ENCODE measurements at regions of chr16 and their contacts with region 1.

Region 1: DNA sequence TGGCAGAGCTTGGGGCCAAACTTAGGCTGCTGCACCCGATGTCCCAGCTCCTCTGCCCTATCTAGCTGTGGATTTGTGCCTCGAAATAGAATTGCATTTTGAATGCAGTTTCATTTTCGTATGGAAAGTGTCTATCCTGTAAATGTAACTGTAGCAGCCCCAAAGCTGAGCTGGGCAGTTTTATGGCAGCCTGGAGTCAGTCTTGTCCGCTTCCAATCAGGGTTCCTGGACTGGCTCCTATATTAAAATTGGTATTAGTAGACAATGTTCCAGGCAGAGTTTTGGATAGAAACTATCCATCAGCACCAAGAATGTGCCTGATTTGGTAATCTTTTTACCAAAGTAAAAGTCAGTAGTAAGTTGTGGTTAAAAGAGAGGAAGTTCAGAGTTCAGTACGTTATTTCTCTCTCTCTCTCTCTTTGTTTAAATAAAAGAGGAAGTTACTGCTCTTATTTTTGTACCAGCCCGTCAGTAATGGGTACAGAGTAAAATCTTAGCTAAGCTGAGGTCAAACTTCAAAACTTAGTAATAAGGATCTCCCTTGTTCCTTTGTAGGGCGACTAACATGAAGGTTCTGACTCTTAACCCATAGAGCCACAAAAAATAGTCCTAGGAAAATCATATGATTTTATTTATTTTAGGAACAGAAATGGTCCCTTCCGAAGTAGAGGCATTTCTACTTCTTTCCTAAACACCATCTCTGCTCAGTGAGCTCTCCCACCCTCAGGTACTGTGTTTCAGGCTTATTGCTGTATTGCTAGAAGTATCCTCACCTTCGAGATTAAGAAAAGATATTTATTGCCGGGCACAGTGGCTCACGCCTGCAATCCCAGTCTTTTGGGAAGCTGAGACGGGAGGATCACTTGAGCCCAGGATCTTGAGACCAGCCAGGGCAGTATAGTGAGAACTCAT is 28.0 kb downstream of the PRKCB start:
- DNase-seq: peak in 2 of 9 experiments; percentile 38 to 67
- ATAC-seq: peak; percentile 86
- H3K4me3 ChIP-seq: peak overlapping the region; percentile 46 to 56
- H3K4me3 Mint-ChIP-seq: peak overlapping the region; percentile 88
- H3K27ac ChIP-seq: peak overlapping the region; percentile 30 to 70
- H3K27ac Mint-ChIP-seq: peak overlapping the region; percentile 91
- H3K4me1 ChIP-seq: peaks cover 68% of the 10 kb centered on the region
- H3K4me1 Mint-ChIP-seq: peaks cover 86% of the 10 kb centered on the region
- H3K27me3 ChIP-seq: no peaks in the 10 kb centered on the region
- H3K27me3 Mint-ChIP-seq: no peaks in the 10 kb centered on the region
- CTCF ChIP-seq: no peak

Region 2: DNA sequence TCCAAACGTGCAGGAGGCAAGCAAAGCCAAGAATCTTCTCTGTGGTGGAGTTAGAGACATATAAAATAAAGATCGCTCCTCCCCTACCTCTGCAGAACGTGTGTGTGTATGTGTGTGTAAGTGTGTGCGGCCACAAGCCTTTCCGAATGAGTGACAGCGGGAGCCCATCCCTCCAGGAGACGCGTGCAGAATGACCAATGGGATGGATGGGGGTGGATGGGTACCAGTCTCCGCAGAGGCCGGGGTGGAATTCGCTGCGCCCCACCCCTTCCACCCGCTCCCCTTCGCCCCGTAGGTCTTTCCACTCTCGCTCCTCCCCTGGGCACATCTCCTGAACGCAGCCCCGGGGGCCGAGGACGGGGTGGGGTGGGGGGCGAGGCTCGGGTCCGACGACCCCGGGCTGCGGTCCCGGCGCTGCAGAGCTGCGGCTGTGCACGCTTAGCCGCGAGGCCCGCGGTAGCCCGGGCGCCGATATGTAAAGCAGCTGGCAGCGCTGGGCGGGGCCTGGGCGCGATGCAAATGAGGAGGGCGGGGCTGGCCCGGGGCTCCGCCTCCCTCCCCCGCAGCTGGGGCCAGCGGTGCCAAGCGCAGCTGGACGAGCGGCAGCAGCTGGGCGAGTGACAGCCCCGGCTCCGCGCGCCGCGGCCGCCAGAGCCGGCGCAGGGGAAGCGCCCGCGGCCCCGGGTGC is 28.2 kb before region 1 on chr16 and contains the start of gene PRKCB:
- CTCF ChIA-PET with region 1: interaction called, 5 read pairs
- POLR2A ChIA-PET with region 1: interaction called, 3 read pairs
- intact Hi-C with region 1: loop called in 1 of 2 experiments (anchors 2 kb)
- DNase-seq: peak; percentile 80 to 94 (median 88)
- ATAC-seq: peak; percentile 88
- H3K4me3 ChIP-seq: peak within 1 kb of the TSS; percentile 71 to 93
- H3K4me3 Mint-ChIP-seq: peak within 1 kb of the TSS; percentile 99
- H3K27ac ChIP-seq: peak within 1 kb of the TSS; percentile 40 to 44
- H3K27ac Mint-ChIP-seq: peak within 1 kb of the TSS; percentile 95
- H3K4me1 ChIP-seq: peaks cover 48% of the 10 kb centered on the region
- H3K4me1 Mint-ChIP-seq: peaks cover 55% of the 10 kb centered on the region
- H3K27me3 ChIP-seq: no peaks in the 10 kb centered on the region
- H3K27me3 Mint-ChIP-seq: no peaks in the 10 kb centered on the region
- CTCF ChIP-seq: no peak
- total RNA-seq, gene PRKCB: 62.8 to 64.4 TPM

Region 3: DNA sequence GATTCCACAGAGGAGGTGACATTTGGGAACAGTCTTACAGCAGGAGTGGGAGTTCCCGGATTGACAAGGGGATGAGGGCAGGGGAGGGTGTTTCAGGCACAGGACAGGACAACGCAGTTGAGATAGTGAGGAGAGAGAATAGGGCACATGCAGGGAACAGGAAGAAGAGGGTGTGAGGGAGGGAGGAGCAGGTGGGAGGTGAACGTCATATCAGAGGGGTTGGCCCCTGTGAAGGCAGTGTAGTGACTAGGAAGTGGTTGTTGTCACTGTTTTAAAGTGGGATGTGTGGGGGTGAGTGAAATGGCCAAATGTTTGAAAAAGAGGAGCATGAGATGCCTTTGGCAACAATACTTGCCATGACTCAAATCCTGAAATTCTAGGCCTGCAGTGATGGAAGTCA is 15.8 kb before region 1 on chr16:
- CTCF ChIA-PET with region 1: interaction called, 4 read pairs
- POLR2A ChIA-PET with region 1: interaction called, 7 read pairs
- intact Hi-C with region 1: loop called in 1 of 2 experiments (anchors 2 kb)
- DNase-seq: peak in 8 of 9 experiments; percentile 13 to 89 (median 62)
- ATAC-seq: peak; percentile 100
- H3K4me3 ChIP-seq: no peak overlapping the region
- H3K4me3 Mint-ChIP-seq: peak overlapping the region; percentile 53
- H3K27ac ChIP-seq: peak overlapping the region; percentile 22 to 64
- H3K27ac Mint-ChIP-seq: peak overlapping the region; percentile 88
- H3K4me1 ChIP-seq: peaks cover 58% of the 10 kb centered on the region
- H3K4me1 Mint-ChIP-seq: peaks cover 78% of the 10 kb centered on the region
- H3K27me3 ChIP-seq: no peaks in the 10 kb centered on the region
- H3K27me3 Mint-ChIP-seq: no peaks in the 10 kb centered on the region
- CTCF ChIP-seq: no peak

Region 4: GRCh38 chr16:23952128-23952970 is 88.6 kb after region 1 on chr16:
- CTCF ChIA-PET with region 1: interaction called, 7 read pairs
- POLR2A ChIA-PET with region 1: no interaction called
- intact Hi-C with region 1: loop called in 1 of 2 experiments (anchors 5 kb)
- DNase-seq: peak in 6 of 9 experiments; percentile 14 to 62 (median 52)
- ATAC-seq: peak; percentile 46
- H3K4me3 ChIP-seq: no peak overlapping the region
- H3K4me3 Mint-ChIP-seq: peak overlapping the region; percentile 76
- H3K27ac ChIP-seq: peak overlapping the region; percentile 8 to 45
- H3K27ac Mint-ChIP-seq: peak overlapping the region; percentile 96
- H3K4me1 ChIP-seq: peaks cover 73% of the 10 kb centered on the region
- H3K4me1 Mint-ChIP-seq: peaks cover 91% of the 10 kb centered on the region
- H3K27me3 ChIP-seq: no peaks in the 10 kb centered on the region
- H3K27me3 Mint-ChIP-seq: no peaks in the 10 kb centered on the region
- CTCF ChIP-seq: no peak

Region 5: DNA sequence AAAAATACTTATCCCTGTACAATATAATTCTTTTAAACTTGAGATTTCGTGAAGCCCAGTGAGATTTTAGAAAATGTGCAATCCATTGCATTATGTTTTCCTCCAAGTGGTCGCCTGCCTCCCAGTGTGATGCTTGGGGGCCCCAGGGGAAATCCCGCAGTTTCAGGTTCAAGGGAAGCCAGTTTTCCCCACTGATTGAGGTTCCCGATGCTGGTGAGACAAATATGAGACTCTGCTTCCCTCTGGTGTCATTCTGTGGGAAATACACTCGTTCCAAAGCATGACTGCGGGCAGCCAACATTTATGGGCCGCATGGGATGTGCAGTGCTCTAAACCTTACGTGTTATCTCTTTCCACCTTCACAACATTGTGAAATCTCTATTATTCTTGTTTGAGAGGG is 172.8 kb after region 1 on chr16:
- CTCF ChIA-PET with region 1: interaction called, 18 read pairs
- POLR2A ChIA-PET with region 1: no interaction called
- intact Hi-C with region 1: no loop called
- DNase-seq: peak in 6 of 9 experiments; percentile 14 to 73 (median 46)
- ATAC-seq: peak; percentile 56
- H3K4me3 ChIP-seq: no peak overlapping the region
- H3K4me3 Mint-ChIP-seq: peak overlapping the region; percentile 49
- H3K27ac ChIP-seq: no peak overlapping the region
- H3K27ac Mint-ChIP-seq: no peak overlapping the region
- H3K4me1 ChIP-seq: peaks cover 50% of the 10 kb centered on the region
- H3K4me1 Mint-ChIP-seq: peaks cover 48% of the 10 kb centered on the region
- H3K27me3 ChIP-seq: no peaks in the 10 kb centered on the region
- H3K27me3 Mint-ChIP-seq: no peaks in the 10 kb centered on the region
- CTCF ChIP-seq: peak; percentile 82

Measured in CD8-positive, alpha-beta T cell (primary cell).